ENCODE measurements at regions of chr1 and their contacts with region 1.

Region 1: DNA sequence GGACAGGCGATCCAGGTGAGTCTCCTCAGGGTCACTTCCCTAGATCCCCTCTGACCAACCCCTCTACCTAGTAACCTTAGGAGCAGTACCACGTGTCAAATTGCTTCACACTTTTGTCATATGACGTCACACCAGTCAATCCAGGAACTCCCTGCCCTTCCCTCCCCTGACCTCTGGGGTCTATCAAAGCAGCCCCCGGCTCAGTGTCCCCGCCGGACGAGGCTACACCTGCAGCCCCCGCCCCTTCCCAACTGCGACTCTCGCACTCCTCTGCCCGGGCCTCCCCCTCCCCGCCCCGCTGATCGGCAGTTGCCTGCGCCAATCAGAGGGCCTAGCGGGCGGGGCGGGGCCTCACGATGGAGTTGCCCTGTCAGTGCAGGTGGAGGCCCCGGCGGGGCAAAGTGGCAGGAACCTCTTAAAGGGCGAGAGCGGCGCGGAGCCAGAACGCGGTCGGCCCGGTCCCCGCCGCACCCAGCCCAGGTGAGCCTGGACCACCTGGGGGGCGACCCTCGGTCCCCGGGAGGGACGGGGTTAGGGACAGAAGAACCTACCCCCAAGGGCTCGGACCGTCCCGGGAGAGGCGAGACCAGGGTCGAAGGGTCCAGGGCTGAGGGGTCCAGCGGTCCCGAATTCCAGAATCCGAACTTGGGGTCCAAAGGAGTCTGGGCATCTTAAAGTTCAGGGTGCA is 27.5 kb upstream of the EPB41 start:
- DNase-seq: peak; percentile 53 to 92
- H3K4me3 ChIP-seq: peak overlapping the region; percentile 90 to 94
- H3K27ac ChIP-seq: peak overlapping the region; percentile 62 to 63
- H3K4me1 ChIP-seq: peaks cover 7 to 24% of the 10 kb centered on the region in 2 donors
- H3K27me3 ChIP-seq: no peaks in the 10 kb centered on the region
- CTCF ChIP-seq: no peak

Region 2: GRCh38 chr1:28259307-28260167 is 627.3 kb before region 1 on chr1 and contains the start of gene SESN2:
- intact Hi-C with region 1: loop called (anchors 10 kb)
- DNase-seq: peak; percentile 98 to 100
- H3K4me3 ChIP-seq: peak within 1 kb of the TSS; percentile 99 to 100
- H3K27ac ChIP-seq: peak within 1 kb of the TSS; percentile 92 to 97
- H3K4me1 ChIP-seq: peaks cover 5 to 30% of the 10 kb centered on the region in 2 donors
- H3K27me3 ChIP-seq: no peaks in the 10 kb centered on the region
- CTCF ChIP-seq: no peak
- total RNA-seq, gene SESN2: 7.6 TPM

Region 3: GRCh38 chr1:28642847-28643635 is 243.8 kb before region 1 on chr1 and contains the start of gene TAF12:
- intact Hi-C with region 1: loop called (anchors 5 kb)
- DNase-seq: peak; percentile 67 to 95
- H3K4me3 ChIP-seq: peak within 1 kb of the TSS; percentile 67 to 76
- H3K27ac ChIP-seq: peak within 1 kb of the TSS; percentile 92
- H3K4me1 ChIP-seq: peaks cover 3 to 25% of the 10 kb centered on the region in 2 donors
- H3K27me3 ChIP-seq: no peaks in the 10 kb centered on the region
- CTCF ChIP-seq: peak; percentile 1 to 50 (median 32)
- total RNA-seq, gene TAF12: 32.2 TPM

Region 4: DNA sequence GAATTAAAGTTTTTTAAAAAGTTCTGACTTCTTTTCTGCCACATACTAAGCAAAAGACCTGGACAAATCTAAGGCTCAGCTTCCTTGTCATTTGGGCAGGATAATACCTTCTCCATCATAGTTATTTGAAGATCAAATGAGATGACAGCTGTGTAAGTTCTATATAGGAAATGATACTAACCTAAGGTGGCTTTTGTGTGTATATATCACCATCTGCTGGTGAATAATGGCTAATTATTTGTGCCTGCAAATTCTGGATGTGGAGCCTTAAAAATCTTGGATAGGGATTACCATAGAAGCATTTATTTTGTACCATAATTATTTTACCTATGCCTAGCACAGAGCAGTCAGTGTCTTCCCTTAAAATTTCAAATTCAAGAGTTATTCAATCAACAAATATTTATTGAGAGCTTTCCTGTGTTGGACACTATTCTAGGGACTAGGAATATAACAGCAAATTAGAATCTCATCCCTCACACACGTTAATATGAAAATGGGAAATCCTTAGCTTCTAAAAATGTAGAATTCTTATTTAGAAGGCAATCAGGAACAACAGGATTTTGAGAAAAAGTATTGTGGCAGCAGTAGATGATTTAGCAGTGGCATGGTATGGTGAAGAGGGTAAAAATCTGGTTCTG is 147.1 kb after region 1 on chr1:
- intact Hi-C with region 1: loop called (anchors 1 kb)
- DNase-seq: no peak
- H3K4me3 ChIP-seq: no peak overlapping the region
- H3K27ac ChIP-seq: no peak overlapping the region
- H3K4me1 ChIP-seq: no peaks in the 10 kb centered on the region
- H3K27me3 ChIP-seq: no peaks in the 10 kb centered on the region
- CTCF ChIP-seq: peak; percentile 45 to 65 (median 49)

Region 5: GRCh38 chr1:29181413-29182225 is 294.7 kb after region 1 on chr1 and contains the start of gene SRSF4:
- intact Hi-C with region 1: loop called (anchors 5 kb)
- DNase-seq: peak; percentile 92 to 99
- H3K4me3 ChIP-seq: peak within 1 kb of the TSS; percentile 95 to 99
- H3K27ac ChIP-seq: peak within 1 kb of the TSS; percentile 100
- H3K4me1 ChIP-seq: peaks cover 18 to 30% of the 10 kb centered on the region in 2 donors
- H3K27me3 ChIP-seq: no peaks in the 10 kb centered on the region
- CTCF ChIP-seq: peak; percentile 73 to 79 (median 75)
- total RNA-seq, gene SRSF4: 49.1 TPM

Region 6: GRCh38 chr1:30718636-30719405 is 1831.9 kb after region 1 on chr1:
- intact Hi-C with region 1: loop called (anchors 10 kb)
- DNase-seq: peak; percentile 32 to 99
- H3K4me3 ChIP-seq: peak overlapping the region; percentile 59 to 71
- H3K27ac ChIP-seq: peak overlapping the region; percentile 99
- H3K4me1 ChIP-seq: peaks cover 0 to 4% of the 10 kb centered on the region in 2 donors
- H3K27me3 ChIP-seq: no peaks in the 10 kb centered on the region
- CTCF ChIP-seq: peak; percentile 99 to 100 (median 99)

Measured in ascending aorta (tissue), 2 donors.